Lower leg skin (tissue), 4 donors: ENCODE measurements at regions of chr3 and their contacts with region 1.

Region 1: GRCh38 chr3:115571413-115571812 is 51.9 kb upstream of the GAP43 start:
- DNase-seq: no peak
- H3K4me3 ChIP-seq: no peak overlapping the region
- CTCF ChIP-seq: no peak
- POLR2A ChIP-seq: no peak

Region 2: DNA sequence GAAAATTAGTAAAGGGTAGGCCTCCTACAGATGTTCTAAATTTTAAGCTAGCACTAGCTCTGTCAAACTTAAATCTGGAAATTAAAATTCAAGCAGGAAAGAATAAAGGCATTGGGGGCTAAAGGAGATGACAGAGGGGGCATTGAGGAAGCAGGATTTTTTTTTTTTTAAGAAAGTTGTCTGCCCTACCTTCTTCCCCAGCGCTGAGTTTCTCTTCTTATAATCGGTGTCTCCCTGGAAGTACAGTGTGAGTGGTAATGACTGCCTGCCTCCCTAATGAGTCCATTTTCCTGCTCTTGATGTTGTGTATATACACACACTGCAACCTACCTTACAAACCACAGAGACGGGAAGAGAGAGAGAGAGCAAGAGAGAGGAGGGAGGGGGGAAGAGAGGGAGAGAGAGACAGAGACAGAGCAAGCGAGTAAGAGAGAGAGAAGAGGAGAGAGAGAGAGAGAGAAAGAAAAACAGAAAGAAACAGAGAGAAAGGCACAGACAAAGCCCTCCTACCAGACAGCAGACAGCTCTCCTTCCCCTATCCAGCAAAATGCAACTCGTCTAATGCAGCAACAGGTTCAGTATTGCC is 471.3 kb before region 1 on chr3:
- intact Hi-C with region 1: no loop called
- DNase-seq: no peak
- H3K4me3 ChIP-seq: peak overlapping the region; percentile 25
- CTCF ChIP-seq: no peak
- POLR2A ChIP-seq: no peak

Region 3: DNA sequence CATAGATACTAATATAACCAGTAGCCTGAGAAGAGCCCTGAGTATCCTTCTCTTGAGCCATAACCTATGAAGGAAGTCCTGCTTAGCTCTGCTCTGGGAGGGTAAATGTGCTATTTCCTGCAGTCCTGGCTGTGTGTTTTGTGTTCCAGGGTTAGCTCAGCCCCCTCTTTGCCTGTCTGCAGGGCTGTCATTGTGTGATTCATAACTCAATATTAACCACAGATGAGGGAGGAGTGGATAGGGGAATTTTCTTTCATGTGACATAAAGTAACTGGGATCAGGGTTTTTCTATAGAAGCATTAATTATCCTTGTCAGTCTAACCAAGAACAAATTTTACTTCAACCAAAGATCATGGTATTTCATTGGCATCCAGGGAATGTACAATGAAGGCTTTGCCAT is 241.0 kb before region 1 on chr3:
- intact Hi-C with region 1: no loop called
- DNase-seq: no peak
- H3K4me3 ChIP-seq: no peak overlapping the region
- CTCF ChIP-seq: no peak
- POLR2A ChIP-seq: no peak

Region 4: GRCh38 chr3:115550285-115550761 is 21.1 kb before region 1 on chr3:
- intact Hi-C with region 1: loop called (anchors 1 kb)
- DNase-seq: no peak
- H3K4me3 ChIP-seq: no peak overlapping the region
- CTCF ChIP-seq: no peak
- POLR2A ChIP-seq: no peak

Region 5: DNA sequence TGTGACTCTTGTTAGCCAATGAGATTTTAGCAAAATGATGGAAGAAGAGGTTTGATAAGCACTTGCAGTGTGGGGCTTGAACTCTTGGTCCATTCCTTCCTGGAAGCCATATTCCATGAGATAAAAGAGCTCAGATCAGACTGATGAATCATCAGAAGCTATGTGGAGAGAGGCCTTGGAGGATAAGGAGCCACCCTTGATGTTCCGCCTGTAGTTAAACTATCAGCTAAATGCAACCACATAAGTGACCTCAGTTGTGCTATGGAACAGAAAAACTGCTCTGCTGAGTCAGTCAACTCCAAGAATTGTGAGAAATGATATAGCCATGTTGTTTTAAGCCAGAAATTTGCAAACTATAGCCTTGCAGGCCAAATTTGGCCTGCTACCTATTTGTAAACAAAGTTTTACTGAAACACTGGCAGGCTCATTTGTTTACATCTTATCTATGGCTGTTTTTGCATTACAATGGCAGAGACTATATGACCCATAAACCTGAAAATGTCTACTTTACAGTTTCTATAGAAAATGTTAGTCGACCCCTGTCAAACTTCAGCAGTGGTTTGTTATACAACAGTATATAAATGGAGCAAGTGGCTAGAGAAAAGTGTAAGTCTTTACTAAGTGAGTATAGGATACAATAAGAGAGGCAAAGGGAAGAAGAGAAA is 24.3 kb after region 1 on chr3:
- intact Hi-C with region 1: no loop called
- DNase-seq: no peak
- H3K4me3 ChIP-seq: no peak overlapping the region
- CTCF ChIP-seq: no peak
- POLR2A ChIP-seq: no peak

Region 6: GRCh38 chr3:115692887-115693524 is 121.6 kb after region 1 on chr3:
- intact Hi-C with region 1: no loop called
- DNase-seq: peak; percentile 79 to 92
- H3K4me3 ChIP-seq: no peak overlapping the region
- CTCF ChIP-seq: peak in 1 of 3 donors; percentile 19
- POLR2A ChIP-seq: no peak